ENCODE measurements at regions of chr12 and their contacts with region 1.

Region 1: GRCh38 chr12:52884526-52885293 is 20.2 kb downstream of the KRT8 start:
- DNase-seq: peak; percentile 86
- ATAC-seq: peak; percentile 82
- H3K4me3 Mint-ChIP-seq: no peak overlapping the region
- H3K27ac Mint-ChIP-seq: no peak overlapping the region
- H3K4me1 Mint-ChIP-seq: peaks cover 7% of the 10 kb centered on the region
- H3K27me3 Mint-ChIP-seq: peaks cover 9% of the 10 kb centered on the region

Region 2: DNA sequence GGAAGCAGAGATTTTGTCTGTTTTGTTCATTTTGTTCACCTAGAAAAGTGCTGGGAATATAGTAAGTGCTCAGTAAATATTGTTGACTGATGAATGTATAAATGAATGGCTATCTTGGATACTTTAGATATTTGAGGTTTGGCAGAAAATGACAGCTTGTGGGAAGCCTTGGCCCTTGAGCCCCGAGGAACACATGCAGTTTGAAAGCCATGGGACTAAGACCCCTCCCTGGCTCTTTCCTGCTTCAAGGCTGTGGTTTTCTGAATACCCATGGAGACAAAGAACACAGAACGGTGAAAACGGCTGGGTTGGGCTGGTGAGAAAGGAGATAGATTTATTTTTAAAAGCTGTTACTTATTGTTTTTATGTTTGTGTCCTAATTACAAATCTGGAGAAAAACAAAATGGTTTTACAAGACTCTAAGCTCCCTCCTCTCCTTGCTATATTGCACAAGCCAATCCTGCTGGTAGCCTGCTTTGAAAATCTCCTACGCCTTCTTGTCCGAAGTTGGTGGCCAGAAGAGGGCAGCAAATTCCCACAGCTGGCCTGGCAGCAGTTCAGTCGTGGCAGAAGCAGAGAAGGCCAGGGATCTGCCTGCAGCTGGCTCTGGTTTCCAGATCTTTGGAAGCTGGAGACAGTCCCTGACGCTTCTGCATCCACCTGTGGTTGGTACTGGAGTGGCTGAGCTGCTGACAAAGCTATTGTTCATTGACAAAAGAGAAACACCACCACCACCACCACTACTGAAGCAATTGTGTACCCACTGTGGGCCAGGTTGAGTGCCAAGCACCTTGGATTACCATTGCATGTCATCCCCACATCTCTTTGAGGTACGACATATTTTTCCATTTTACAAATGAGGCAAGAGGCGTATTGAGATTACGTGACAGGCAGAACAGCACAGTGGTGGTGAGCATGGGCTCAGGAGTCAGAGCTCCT is 512.2 kb before region 1 on chr12:
- CTCF ChIA-PET with region 1: interaction called, 44 read pairs
- POLR2A ChIA-PET with region 1: no interaction called
- DNase-seq: peak; percentile 76
- ATAC-seq: peak; percentile 72
- H3K4me3 Mint-ChIP-seq: no peak overlapping the region
- H3K27ac Mint-ChIP-seq: no peak overlapping the region
- H3K4me1 Mint-ChIP-seq: no peaks in the 10 kb centered on the region
- H3K27me3 Mint-ChIP-seq: peaks cover 35% of the 10 kb centered on the region

Region 3: GRCh38 chr12:52698651-52699340 is 185.9 kb before region 1 on chr12:
- CTCF ChIA-PET with region 1: no interaction called
- POLR2A ChIA-PET with region 1: no interaction called
- DNase-seq: no peak
- ATAC-seq: no peak
- H3K4me3 Mint-ChIP-seq: no peak overlapping the region
- H3K27ac Mint-ChIP-seq: no peak overlapping the region
- H3K4me1 Mint-ChIP-seq: no peaks in the 10 kb centered on the region
- H3K27me3 Mint-ChIP-seq: peaks cover 24% of the 10 kb centered on the region

Region 4: DNA sequence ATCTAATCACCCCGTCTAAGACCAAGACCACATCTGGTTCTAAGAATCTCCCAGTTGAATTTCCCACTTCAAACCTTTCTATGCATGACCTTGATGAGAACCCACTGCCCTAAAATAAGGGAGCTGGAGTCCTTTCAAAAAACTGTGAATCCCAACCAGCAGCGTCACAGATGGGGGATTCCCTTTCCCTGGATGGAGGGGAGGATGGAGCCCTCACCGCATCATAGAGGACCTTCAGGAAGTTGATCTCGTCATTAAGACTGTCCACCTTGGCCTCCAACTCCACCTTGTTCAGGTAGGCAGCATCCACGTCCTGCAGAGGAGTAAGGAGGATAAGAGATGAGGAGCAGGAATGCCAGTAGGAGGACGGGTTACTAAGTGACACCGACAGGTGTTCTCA is 75.5 kb before region 1 on chr12:
- CTCF ChIA-PET with region 1: no interaction called
- POLR2A ChIA-PET with region 1: no interaction called
- DNase-seq: no peak
- ATAC-seq: no peak
- H3K4me3 Mint-ChIP-seq: no peak overlapping the region
- H3K27ac Mint-ChIP-seq: no peak overlapping the region
- H3K4me1 Mint-ChIP-seq: no peaks in the 10 kb centered on the region
- H3K27me3 Mint-ChIP-seq: peaks cover 2% of the 10 kb centered on the region

Region 5: DNA sequence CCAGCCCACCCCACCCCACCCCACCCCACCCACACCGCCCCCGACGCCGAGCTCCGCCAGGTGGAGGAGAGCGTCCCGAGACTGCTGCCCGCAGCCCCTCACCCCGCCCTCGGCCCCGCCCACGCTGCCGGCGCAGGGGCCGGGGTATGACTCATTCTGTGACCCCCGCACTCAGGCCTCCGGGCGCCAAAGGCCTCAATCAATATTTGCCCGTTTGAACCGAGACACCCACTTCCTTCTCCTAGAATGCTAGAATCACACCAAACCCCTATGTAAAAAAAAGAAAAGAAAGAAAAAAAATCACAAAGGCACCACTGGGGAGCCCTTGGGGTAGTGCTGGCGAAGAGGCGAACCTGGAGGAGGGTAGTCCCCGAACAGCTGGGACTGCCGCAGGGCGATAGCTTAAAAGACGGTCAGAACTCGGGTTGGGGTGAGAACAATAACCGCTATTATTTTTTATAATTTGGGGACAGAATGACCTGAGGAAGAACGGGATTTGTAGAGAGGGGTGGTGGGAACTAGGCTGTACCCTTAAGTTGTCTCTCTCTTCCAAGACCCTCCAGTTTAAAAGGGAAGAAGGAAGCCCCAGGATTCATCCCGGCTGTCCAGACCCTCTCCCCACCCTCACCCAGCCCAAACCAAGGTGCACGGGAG is 19.3 kb after region 1 on chr12:
- CTCF ChIA-PET with region 1: interaction called, 60 read pairs
- POLR2A ChIA-PET with region 1: no interaction called
- DNase-seq: peak; percentile 40
- ATAC-seq: peak; percentile 70
- H3K4me3 Mint-ChIP-seq: peak overlapping the region; percentile 21
- H3K27ac Mint-ChIP-seq: no peak overlapping the region
- H3K4me1 Mint-ChIP-seq: peaks cover 14% of the 10 kb centered on the region
- H3K27me3 Mint-ChIP-seq: peaks cover 3% of the 10 kb centered on the region

Region 6: DNA sequence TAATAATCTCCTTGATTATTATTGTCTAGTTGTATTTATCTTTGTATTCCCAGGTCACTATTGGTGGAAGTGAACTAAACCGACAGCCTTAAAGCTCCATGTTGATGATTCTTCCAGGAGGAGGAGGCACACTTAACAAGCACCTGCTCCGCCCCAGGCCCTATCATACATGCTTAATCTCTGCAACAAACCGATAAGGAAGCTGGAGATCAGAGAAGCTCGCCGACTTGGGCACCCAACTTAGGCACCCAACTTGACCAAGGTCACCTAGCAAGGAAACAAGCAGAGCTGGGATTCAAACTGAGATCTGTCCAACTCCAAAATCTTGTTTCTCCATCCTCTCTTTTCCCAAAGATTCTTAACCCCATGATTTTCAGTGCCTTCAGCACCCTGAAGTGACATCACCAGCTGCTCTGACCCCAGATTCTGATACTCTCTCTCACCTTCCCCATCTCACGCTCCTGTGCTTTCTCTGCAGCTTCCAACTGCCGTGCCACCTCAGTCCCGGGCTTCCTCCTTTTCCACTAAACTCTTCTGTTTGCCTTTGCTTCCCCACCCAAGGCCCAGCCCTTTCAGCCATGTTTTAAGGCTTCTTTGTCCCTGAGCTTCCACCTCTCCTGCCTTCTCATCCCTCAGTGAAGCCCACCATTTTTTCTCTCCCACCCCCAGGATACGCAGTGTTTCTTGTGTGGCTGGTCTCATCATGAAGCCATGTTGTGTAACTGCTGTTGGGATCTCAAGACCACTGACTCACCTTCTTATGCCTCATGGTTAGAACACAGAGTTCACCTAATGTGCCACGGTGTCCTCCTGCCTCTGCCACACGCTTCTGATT is 57.6 kb after region 1 on chr12:
- CTCF ChIA-PET with region 1: interaction called, 16 read pairs
- POLR2A ChIA-PET with region 1: no interaction called
- DNase-seq: no peak
- ATAC-seq: no peak
- H3K4me3 Mint-ChIP-seq: no peak overlapping the region
- H3K27ac Mint-ChIP-seq: no peak overlapping the region
- H3K4me1 Mint-ChIP-seq: no peaks in the 10 kb centered on the region
- H3K27me3 Mint-ChIP-seq: peaks cover 10% of the 10 kb centered on the region

Region 7: GRCh38 chr12:52969828-52970569 is 85.3 kb after region 1 on chr12:
- CTCF ChIA-PET with region 1: interaction called, 13 read pairs
- POLR2A ChIA-PET with region 1: no interaction called
- DNase-seq: no peak
- ATAC-seq: no peak
- H3K4me3 Mint-ChIP-seq: no peak overlapping the region
- H3K27ac Mint-ChIP-seq: no peak overlapping the region
- H3K4me1 Mint-ChIP-seq: no peaks in the 10 kb centered on the region
- H3K27me3 Mint-ChIP-seq: peaks cover 13% of the 10 kb centered on the region

Region 8: DNA sequence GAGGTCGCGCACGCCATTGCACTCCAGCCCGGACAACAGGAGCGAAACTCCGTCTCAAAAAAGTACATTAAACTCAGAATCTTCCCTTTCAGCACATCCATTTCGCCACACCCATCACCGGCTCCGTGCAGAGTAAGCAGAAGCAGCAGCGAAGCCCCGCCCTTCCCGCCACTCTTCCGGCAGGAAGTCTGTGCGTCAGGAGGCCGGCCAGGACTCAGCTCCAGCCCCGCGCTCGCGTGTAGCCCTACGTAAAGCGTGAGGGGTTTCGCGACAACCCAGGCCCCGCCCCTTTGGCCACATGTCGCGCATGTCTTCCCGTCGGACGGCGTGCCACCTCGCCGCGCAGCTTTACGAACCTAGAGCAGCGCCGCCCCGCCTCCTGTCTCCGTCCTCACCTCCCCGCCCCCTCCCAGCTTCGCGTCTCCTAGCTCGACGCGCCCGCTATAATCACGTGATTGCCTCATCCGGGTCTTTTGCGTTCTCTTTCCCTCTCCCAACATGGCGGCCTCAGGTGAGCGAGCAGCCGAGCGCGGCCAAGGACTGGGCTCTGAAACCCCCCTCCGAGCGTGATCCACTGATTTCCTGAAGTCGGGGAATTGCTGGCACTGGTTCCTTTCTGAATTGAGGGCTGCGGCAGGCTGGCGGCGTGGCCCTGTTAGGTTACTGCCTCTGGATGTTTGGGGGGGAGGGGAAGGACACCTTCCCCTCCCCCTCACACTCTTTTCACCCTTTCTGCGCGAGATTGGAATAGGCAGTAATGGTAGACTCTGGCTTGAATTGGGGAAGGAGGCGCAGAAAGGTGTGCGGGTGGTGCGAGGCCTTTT is 121.5 kb after region 1 on chr12 and contains the start of gene EIF4B:
- CTCF ChIA-PET with region 1: interaction called, 12 read pairs
- POLR2A ChIA-PET with region 1: no interaction called
- DNase-seq: peak; percentile 100
- ATAC-seq: peak; percentile 97
- H3K4me3 Mint-ChIP-seq: peak within 1 kb of the TSS; percentile 97
- H3K27ac Mint-ChIP-seq: peak within 1 kb of the TSS; percentile 98
- H3K4me1 Mint-ChIP-seq: peaks cover 47% of the 10 kb centered on the region
- H3K27me3 Mint-ChIP-seq: peaks cover 2% of the 10 kb centered on the region
- total RNA-seq, gene EIF4B: 352 to 353 TPM